ENCODE measurements at regions of chr15 and their contacts with region 1.

Region 1: DNA sequence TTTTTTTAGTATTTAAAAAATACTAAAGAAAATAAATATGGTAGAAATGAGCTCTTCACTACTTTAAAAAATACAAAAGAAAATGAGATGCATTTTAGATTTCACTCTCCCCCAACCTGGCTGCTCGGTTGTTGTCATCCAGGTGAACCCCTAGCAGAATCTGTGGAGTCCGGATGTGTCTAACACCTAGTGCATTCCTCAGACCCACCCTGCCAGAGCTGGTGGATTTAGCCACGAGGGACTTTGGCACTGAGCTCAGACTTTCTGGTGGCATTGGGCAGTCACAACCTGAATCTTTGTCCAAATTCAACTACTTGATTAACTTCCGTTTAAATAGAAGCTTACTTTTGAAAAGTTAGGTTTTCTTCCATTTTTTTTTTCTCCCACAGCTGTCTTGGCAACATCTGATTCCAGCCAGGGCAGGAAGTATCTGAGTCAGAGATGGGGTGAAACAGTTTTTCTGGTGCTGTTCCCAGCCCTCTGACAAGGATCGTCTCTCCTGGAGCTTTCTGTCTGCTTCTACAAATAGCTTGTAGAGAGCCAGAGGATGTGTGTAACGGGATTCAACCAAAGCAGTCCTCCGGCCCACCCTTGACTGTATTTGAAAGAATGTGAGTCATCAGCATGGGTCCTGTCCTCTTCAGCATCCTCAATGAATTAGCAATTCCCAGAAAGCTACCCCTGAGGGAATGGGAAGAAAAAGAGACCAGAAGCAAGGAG is 301.8 kb upstream of the MCTP2 start:
- DNase-seq: peak; percentile 84

Region 2: DNA sequence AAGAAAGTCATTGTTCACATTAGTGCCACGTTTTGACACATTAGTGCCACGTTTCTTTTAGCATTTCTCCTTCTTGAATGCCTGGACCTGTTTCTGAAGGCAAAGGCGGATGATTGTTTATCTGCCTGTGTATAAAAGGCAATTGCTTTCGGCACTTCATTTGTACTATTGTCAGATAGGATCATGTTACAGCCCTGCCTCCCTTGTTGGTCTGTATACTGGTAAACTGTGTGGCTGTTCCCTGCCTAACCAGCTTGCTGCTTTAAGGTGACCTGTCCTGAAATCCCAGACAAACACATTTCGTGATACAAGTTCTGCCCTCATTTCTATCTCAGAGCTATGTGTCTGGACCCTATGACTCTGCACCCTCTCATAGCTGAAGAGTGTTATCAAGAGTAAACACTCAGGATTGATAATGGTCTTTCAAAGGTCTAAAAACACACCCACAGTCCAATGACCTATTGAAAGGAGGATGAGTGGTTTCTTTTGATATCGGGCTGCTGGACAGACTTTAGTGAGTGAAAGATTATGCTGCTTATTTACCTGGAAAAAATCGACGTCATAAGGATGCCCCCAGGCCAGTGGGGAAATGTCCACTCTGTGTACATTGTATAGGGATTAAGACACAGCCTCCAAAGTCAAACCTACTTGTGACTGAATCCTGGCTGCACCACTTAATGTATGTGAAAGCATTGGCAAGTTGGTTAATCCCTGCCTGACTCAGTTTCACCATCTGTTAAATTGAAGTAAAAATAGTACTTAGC is 25.6 kb after region 1 on chr15:
- intact Hi-C with region 1: loop called in 1 of 2 experiments (anchors 2 kb)
- DNase-seq: no peak

Measured in posterior vena cava (tissue), 2 donors.